ENCODE measurements at regions of chr19 and their contacts with region 1.

Region 1: DNA sequence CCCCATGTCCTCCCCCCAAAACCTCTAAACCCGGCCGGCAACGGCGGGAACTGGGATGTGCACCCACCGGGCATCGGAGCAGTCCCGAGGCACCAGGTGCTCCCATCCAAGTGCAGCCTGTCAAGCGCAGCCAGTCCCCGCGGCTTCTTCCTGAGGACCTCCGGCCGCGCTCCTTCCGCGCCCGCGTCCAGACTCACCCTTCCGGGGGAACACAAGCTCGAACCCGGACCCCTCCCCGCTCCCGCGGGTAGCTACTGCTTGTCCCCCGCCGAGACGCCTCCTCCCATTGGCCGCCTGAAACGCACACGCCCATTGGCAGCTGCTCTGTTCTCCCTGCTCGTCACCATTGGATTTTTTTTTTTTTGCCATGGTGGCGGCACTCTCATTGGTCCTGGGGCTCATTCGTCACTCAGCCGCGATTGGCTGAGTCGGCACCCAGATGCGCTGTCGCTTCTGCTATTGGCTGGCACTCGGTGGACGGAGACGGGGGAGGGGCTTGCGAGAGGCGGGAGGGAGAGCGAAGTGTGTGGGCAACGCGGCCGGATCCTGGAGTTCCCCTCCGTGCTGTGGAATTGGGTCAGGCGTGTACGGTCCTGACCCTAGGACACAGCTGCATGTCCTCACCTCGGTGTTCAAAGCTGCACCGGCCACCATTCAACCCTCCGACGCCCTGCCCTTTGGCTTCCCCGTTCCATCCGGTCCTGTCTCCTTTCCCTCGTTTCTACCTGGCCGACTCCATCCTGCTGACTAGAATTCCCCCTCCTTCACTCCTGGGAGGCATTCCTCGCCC is at the start of gene TYK2:
- DNase-seq: peak; percentile 98 to 99
- H3K4me3 ChIP-seq: peak within 1 kb of the TSS; percentile 80 to 92
- H3K27ac ChIP-seq: peak within 1 kb of the TSS; percentile 80 to 83
- H3K4me1 ChIP-seq: peaks cover 0 to 17% (median 12%) of the 10 kb centered on the region in 4 donors
- H3K27me3 ChIP-seq: no peaks in the 10 kb centered on the region
- CTCF ChIP-seq: peak in 1 of 2 experiments; percentile 12

Region 2: GRCh38 chr19:10332955-10333757 is 47.4 kb before region 1 on chr19 and contains the start of gene RAVER1:
- intact Hi-C with region 1: loop called (anchors 5 kb)
- DNase-seq: peak; percentile 96 to 99
- H3K4me3 ChIP-seq: peak within 1 kb of the TSS; percentile 65
- H3K27ac ChIP-seq: peak within 1 kb of the TSS; percentile 80 to 81
- H3K4me1 ChIP-seq: peaks cover 0 to 30% (median 25%) of the 10 kb centered on the region in 4 donors
- H3K27me3 ChIP-seq: no peaks in the 10 kb centered on the region
- CTCF ChIP-seq: no peak

Region 3: GRCh38 chr19:10390652-10391286 is 10.3 kb after region 1 on chr19:
- intact Hi-C with region 1: no loop called
- DNase-seq: peak; percentile 74 to 80
- H3K4me3 ChIP-seq: no peak overlapping the region
- H3K27ac ChIP-seq: no peak overlapping the region
- H3K4me1 ChIP-seq: peaks cover 0 to 5% (median 0%) of the 10 kb centered on the region in 4 donors
- H3K27me3 ChIP-seq: peaks cover 0 to 8% of the 10 kb centered on the region in 2 donors
- CTCF ChIP-seq: peak; percentile 75 to 79

Measured in tibial artery (tissue), 4 donors.